T-cell (primary cell): ENCODE measurements at regions of chr9 and their contacts with region 1.

Region 1: GRCh38 chr9:4762108-4762885 is 21.3 kb upstream of the AK3 start:
- DNase-seq: peak; percentile 54 to 90 (median 73)
- ATAC-seq: peak; percentile 71 to 89 (median 79)
- H3K4me3 ChIP-seq: no peak overlapping the region
- H3K4me3 Mint-ChIP-seq: peak overlapping the region; percentile 25 to 46 (median 39)
- H3K27ac ChIP-seq: no peak overlapping the region
- H3K27ac Mint-ChIP-seq: peak overlapping the region in 1 of 2 donors; percentile 20
- H3K4me1 ChIP-seq: peaks cover 3 to 14% of the 10 kb centered on the region in 2 experiments
- H3K4me1 Mint-ChIP-seq: peaks cover 7 to 15% (median 12%) of the 10 kb centered on the region in 3 donors
- H3K27me3 ChIP-seq: peaks cover 0 to 11% of the 10 kb centered on the region in 2 experiments
- H3K27me3 Mint-ChIP-seq: peaks cover 0 to 3% of the 10 kb centered on the region in 2 donors

Region 2: DNA sequence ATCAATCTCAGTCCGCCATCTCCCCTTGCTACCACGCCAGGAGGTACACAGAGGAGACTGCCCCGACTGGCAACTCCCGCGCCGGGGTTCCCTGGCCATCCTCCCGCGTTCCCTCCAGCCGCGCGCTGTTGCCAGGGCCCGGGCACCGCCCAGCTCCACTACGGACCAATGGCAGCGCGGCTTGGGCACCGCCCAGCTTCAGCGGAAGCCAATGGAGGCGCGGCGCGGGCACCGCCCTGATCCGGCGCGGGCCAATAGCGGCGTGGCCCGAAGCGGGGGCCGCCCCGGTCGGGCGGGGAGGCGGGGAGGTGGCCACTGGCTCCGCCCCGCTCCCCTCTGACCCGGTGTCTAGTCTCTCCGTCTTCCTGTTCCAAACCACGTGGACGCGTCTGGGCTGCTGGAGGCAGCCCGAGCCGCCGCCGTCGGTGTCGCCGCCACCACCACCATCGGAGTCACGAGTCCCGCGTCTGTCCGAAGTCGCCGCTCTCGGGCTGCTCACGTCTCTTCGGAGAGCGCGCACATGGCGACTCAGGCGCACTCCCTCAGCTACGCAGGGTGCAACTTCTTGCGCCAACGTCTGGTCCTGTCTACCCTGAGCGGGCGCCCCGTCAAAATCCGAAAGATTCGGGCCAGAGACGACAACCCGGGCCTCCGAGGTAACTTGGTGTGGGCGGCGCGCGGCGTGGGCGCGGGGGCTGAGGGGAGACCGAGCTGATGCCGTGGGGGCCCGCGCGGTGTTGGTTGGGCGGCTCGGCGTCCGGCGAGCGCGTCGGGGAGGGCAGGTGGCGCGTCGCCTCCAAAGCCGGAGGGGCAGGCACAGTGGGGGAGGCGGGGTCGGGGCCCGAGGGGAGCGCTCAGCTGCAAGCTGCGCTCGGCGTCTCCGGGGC is 30.5 kb after region 1 on chr9 and contains the start of gene RCL1:
- CTCF ChIA-PET with region 1: interaction called, 13 to 25 read pairs
- POLR2A ChIA-PET with region 1: interaction called in 1 of 2 experiments, 3 read pairs
- DNase-seq: peak; percentile 84 to 98 (median 95)
- ATAC-seq: peak; percentile 92 to 95 (median 92)
- H3K4me3 ChIP-seq: peak within 1 kb of the TSS; percentile 74 to 97
- H3K4me3 Mint-ChIP-seq: peak within 1 kb of the TSS; percentile 95 to 96 (median 95)
- H3K27ac ChIP-seq: peak within 1 kb of the TSS; percentile 83
- H3K27ac Mint-ChIP-seq: peak within 1 kb of the TSS; percentile 92
- H3K4me1 ChIP-seq: peaks cover 9 to 21% of the 10 kb centered on the region in 2 experiments
- H3K4me1 Mint-ChIP-seq: peaks cover 41 to 53% (median 47%) of the 10 kb centered on the region in 3 donors
- H3K27me3 ChIP-seq: peaks cover 0 to 5% of the 10 kb centered on the region in 2 experiments
- H3K27me3 Mint-ChIP-seq: no peaks in the 10 kb centered on the region
- total RNA-seq, gene RCL1: 22.0 to 38.7 (median 24.2) TPM

Region 3: GRCh38 chr9:4923580-4924544 is 161.6 kb after region 1 on chr9:
- CTCF ChIA-PET with region 1: interaction called, 6 to 13 read pairs
- POLR2A ChIA-PET with region 1: no interaction called
- DNase-seq: peak in 3 of 35 experiments; percentile 3 to 51 (median 5)
- ATAC-seq: peak in 3 of 4 experiments; percentile 50 to 67 (median 51)
- H3K4me3 ChIP-seq: no peak overlapping the region
- H3K4me3 Mint-ChIP-seq: no peak overlapping the region
- H3K27ac ChIP-seq: no peak overlapping the region
- H3K27ac Mint-ChIP-seq: no peak overlapping the region
- H3K4me1 ChIP-seq: no peaks in the 10 kb centered on the region
- H3K4me1 Mint-ChIP-seq: peaks cover 2 to 5% (median 3%) of the 10 kb centered on the region in 3 donors
- H3K27me3 ChIP-seq: no peaks in the 10 kb centered on the region
- H3K27me3 Mint-ChIP-seq: no peaks in the 10 kb centered on the region

Region 4: DNA sequence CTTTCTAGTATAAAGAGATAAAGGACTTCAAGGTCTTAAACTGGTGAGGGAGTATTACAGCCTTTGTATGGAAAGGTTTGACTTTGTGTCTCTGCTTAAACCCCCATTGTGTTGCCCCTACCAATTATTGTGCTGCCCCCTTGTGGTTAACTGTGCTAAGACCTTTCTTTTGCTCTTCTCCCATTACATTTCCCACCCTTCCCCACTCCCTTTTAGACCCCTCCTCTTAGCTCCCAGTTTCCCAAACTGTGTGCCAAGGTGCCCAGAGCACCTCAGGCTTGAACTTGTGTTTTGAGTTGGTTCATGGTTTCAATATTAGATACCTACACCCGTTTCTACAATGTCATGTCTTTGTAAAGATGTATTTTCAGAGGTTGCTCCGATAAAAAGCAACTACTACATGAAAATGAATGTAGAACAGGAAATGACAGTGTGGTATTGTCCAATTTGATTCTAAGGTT is 225.7 kb after region 1 on chr9:
- CTCF ChIA-PET with region 1: interaction called, 18 to 30 read pairs
- POLR2A ChIA-PET with region 1: no interaction called
- DNase-seq: peak in 33 of 35 experiments; percentile 6 to 80 (median 25)
- ATAC-seq: no peak
- H3K4me3 ChIP-seq: no peak overlapping the region
- H3K4me3 Mint-ChIP-seq: no peak overlapping the region
- H3K27ac ChIP-seq: no peak overlapping the region
- H3K27ac Mint-ChIP-seq: no peak overlapping the region
- H3K4me1 ChIP-seq: peaks cover 17 to 25% of the 10 kb centered on the region in 2 experiments
- H3K4me1 Mint-ChIP-seq: peaks cover 36 to 42% (median 37%) of the 10 kb centered on the region in 3 donors
- H3K27me3 ChIP-seq: no peaks in the 10 kb centered on the region
- H3K27me3 Mint-ChIP-seq: no peaks in the 10 kb centered on the region

Region 5: GRCh38 chr9:5402217-5402616 is 639.9 kb after region 1 on chr9:
- CTCF ChIA-PET with region 1: no interaction called
- POLR2A ChIA-PET with region 1: no interaction called
- DNase-seq: no peak
- ATAC-seq: no peak
- H3K4me3 ChIP-seq: no peak overlapping the region
- H3K4me3 Mint-ChIP-seq: peak overlapping the region in 1 of 3 donors; percentile 2
- H3K27ac ChIP-seq: no peak overlapping the region
- H3K27ac Mint-ChIP-seq: no peak overlapping the region
- H3K4me1 ChIP-seq: peaks cover 3 to 4% of the 10 kb centered on the region in 2 experiments
- H3K4me1 Mint-ChIP-seq: peaks cover 22 to 46% (median 25%) of the 10 kb centered on the region in 3 donors
- H3K27me3 ChIP-seq: no peaks in the 10 kb centered on the region
- H3K27me3 Mint-ChIP-seq: no peaks in the 10 kb centered on the region

Region 6: GRCh38 chr9:6015278-6016157 is 1253.2 kb after region 1 on chr9 and contains the start of gene RANBP6:
- CTCF ChIA-PET with region 1: interaction called in 1 of 2 experiments, 14 read pairs
- POLR2A ChIA-PET with region 1: no interaction called
- DNase-seq: peak; percentile 76 to 94 (median 91)
- ATAC-seq: peak; percentile 99
- H3K4me3 ChIP-seq: peak within 1 kb of the TSS; percentile 88 to 97
- H3K4me3 Mint-ChIP-seq: peak within 1 kb of the TSS; percentile 89 to 98 (median 95)
- H3K27ac ChIP-seq: peak within 1 kb of the TSS; percentile 84
- H3K27ac Mint-ChIP-seq: peak within 1 kb of the TSS; percentile 90 to 99
- H3K4me1 ChIP-seq: peaks cover 10 to 16% of the 10 kb centered on the region in 2 experiments
- H3K4me1 Mint-ChIP-seq: peaks cover 32 to 45% (median 43%) of the 10 kb centered on the region in 3 donors
- H3K27me3 ChIP-seq: no peaks in the 10 kb centered on the region
- H3K27me3 Mint-ChIP-seq: no peaks in the 10 kb centered on the region
- total RNA-seq, gene RANBP6: 26.2 to 34.6 (median 29.3) TPM